Activated T-helper 1 cell treated with anti-CD3 and anti-CD28 coated beads, Interleukin-12 subunit alpha, Interleukin-12 subunit beta, Interleukin-2, Interleukin-4 antibody, amounts not matched to agents 30 ng/mL and 10 ng/mL and 1 ng/mL, durations not matched to agents 14 hours and 24 hours and 36 hours (primary cell): ENCODE measurements at regions of chr17 and their contacts with region 1.

Region 1: DNA sequence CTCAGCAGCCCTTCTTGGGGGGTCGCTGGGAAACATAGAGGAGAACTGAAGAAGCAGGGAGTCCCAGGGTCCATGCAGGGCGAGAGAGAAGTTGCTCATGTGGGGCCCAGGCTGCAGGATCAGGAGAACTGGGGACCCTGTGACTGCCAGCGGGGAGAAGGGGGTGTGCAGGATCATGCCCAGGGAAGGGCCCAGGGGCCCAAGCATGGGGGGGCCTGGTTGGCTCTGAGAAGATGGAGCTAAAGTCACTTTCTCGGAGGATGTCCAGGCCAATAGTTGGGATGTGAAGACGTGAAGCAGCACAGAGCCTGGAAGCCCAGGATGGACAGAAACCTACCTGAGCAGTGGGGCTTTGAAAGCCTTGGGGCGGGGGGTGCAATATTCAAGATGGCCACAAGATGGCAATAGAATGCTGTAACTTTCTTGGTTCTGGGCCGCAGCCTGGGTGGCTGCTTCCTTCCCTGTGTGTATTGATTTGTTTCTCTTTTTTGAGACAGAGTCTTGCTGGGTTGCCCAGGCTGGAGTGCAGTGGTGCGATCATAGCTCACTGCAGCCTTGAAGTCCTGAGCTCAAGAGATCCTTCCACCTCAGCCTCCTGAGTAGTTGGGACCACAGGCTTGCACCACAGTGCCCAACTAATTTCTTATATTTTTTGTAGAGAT is 3.4 kb downstream of the STH start:
- DNase-seq: peak; percentile 63
- H3K4me3 Mint-ChIP-seq: no peak overlapping the region
- H3K27ac Mint-ChIP-seq: no peak overlapping the region
- H3K4me1 Mint-ChIP-seq: peaks cover 8% of the 10 kb centered on the region
- H3K27me3 Mint-ChIP-seq: peaks cover 6% of the 10 kb centered on the region

Region 2: DNA sequence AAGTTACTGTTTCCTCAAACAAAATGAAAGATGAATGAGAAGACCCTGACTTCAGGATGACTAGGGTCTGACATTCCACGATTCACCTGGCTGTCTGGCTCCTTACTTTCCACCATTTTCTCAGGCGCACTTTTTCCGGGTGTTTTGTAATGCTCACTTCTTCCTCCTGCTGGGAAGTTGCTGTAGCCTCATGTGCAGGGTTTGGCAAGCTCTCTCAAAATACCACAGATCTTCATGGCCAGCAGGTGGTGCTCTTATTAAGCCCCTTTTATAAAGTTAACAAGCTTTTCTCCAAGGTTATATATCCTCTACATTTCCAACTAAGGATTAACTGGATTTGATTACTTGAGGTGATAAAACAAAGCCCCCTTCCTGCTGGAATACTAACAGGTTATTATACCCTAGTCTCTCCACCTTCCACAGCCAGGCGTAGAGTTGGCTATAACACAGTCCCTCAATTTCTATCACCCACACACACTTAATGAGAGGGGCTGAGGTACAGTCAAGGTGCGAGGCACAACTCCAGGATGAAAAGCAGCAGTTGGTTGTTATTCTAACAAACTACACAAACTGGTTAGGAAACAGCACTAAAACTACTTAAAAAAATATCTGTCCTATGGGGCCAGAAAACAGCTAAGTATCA is 42.0 kb after region 1 on chr17:
- intact Hi-C with region 1: loop called (anchors 2 kb)
- DNase-seq: peak; percentile 12
- H3K4me3 Mint-ChIP-seq: no peak overlapping the region
- H3K27ac Mint-ChIP-seq: peak overlapping the region; percentile 2
- H3K4me1 Mint-ChIP-seq: peaks cover 30% of the 10 kb centered on the region
- H3K27me3 Mint-ChIP-seq: no peaks in the 10 kb centered on the region